Posterior cingulate gyrus (tissue), 11 donors: ENCODE measurements at regions of chr15 and their contacts with region 1.

Region 1: DNA sequence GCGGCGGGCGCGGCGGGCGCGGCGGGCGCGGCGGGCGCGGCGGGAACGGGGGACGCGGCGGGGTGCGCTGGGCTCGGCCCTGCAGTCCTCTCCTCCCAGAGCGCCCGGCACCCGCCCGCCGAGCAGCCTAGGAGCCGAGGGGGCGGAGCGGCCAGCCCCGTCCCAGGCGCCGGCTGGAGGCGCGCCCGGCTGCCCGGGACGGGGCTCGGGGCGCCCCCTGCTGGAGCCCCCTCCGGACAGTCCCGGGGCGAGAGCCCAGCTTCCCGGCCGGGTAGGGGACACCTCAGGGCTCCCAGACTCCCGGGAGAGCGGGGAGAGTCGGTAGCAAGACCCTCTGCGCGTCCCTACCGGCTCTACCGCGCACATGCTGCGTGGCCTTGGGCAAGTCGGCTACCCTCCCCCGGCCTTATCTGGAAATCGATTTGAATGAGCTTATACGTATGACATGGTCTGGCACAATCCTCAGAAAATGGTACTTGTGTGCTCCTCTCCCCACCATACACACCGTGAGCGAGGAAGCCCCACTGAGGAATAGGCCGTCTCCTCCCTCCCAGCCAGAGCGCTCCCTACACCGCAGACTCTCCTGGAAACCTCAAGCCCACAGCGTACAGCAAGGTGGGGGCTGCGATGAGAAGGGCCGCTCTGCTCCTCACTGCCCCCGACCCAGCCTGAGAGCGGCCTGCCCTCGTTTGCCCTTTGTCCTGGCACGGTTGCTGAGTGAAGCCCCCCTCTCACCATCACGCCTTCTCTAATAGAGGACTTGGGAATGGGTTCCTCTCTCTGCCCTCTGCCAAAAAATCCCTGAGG is at the start of gene DAPK2:
- DNase-seq: peak; percentile 35 to 96 (median 66)

Region 2: GRCh38 chr15:63638839-63639238 is 407.7 kb before region 1 on chr15:
- intact Hi-C with region 1: no loop called
- DNase-seq: no peak

Region 3: DNA sequence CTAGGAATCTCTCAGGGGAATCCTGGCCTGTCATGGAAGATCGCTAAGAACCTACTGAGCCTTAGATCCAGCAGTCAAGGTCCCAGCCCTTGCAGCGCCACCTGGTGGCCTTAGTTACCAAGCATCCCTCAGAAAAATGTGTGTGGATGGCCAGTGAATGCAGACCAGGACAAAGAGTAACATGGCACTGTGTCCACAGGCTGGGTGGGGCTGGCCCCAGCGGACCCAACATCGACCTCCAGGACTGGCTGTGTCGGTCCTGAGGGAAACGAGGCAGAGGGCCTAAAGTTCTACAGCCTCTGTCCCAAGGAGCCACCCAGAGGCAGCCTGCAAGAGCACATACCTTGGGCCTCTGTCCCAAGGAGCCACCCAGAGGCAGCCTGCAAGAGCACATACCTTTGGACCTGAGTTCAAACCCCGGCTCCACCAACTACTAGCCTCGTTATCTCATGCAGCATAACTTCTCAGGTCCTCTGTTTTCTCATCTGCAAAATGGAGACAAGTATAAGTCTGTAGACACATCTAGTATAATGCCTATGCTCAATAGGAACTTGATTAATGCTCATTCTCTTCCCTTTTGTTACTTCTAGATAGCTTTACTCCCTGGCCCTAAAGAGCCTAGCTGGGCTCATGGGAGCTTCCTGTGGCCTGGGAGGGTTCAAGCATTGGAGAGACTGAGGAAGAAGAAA is 155.3 kb before region 1 on chr15:
- intact Hi-C with region 1: loop called (anchors 5 kb)
- DNase-seq: peak; percentile 56 to 97 (median 84)

Region 4: DNA sequence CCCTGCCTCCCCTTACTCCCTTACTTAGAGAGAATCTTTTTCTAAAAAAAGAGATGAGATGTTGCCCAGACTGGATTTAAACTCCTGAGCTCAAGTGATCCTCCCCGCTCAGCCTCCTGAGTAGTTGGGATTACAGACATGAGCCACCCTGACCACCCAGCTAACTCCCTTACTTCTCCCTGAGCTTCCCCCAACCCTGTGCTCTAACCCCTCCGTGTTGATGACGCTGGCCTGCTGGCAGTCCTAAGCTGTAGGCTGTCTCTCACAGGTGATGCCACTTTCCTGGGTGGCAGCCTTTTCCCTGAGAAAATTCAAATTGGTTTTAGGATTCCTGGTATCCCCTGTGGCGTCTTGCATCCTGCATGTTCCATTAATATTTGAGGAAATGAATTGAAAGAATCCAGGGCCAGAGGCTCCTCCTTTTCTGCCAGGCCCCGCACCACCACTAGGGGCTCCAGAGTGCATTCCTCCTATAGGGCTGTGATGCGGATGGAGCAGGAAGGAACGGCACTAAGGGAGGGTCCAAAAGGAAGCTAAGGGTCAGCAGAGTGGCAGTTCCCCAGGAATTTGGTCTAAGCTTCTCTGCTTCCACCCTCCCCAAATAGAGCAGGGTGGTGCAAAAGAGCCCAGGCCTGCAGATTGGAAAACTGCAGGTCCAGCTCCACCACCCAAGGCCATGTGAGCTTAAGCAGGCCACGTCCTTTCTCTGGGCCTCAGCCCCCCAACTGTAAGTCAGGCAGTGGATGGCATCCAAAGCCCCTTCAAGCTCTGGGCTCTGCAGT is 101.4 kb before region 1 on chr15:
- intact Hi-C with region 1: loop called (anchors 1 kb)
- DNase-seq: peak in 7 of 10 donors; percentile 50 to 89 (median 69)

Region 5: DNA sequence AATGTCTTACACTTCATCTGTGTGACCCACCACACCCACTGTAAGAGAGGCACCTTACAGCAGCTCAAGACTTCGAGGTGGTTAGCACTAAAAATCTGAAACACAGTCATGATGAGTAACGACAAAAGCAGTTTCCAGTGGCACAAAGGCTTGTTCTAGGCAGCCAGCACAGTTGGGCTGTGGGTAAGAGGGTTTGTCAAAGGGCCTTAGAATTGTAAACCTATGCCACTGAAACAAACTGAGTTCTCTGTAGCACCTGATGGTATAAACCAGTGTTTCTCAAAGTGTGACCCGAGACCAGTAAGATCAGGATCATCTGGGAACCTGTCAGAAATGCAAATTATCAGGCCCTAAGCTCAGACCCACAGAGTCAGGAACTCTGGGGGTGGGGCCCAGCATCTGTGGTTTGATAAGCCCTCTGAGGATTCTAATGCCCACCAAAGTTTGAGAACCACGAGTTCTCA is 36.7 kb before region 1 on chr15:
- intact Hi-C with region 1: loop called (anchors 5 kb)
- DNase-seq: no peak

Region 6: DNA sequence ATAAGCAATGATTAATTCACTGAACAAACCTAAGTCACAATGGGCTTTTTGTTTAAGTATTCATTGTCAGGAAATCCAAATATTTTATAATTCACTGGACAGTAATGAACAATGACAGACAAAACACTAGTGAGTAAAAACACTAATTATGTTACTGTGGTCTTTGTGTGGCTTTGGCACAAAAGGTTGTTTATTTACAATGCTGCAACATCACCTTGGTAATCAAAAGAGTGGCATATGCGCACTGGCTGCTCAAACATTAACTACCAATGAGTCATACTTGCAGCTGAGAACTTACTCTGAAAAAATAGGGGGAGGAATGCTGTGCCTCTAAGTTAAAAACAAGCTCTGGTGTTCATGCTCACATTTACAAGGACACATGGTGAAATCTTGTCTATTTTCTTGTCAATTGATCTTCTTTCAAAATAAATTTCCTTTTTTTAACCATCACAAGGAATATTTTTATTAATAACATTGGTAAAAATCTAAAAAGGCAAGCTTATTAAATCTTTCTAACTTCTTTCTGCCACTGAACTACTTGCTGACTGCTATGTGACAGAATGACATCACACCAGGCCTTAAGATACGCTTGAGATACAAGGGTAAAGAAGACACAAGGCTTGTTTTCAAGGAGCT is 201.5 kb after region 1 on chr15:
- intact Hi-C with region 1: no loop called
- DNase-seq: no peak